Prostate gland (tissue), 2 donors: ENCODE measurements at regions of chr11 and their contacts with region 1.

Region 1: DNA sequence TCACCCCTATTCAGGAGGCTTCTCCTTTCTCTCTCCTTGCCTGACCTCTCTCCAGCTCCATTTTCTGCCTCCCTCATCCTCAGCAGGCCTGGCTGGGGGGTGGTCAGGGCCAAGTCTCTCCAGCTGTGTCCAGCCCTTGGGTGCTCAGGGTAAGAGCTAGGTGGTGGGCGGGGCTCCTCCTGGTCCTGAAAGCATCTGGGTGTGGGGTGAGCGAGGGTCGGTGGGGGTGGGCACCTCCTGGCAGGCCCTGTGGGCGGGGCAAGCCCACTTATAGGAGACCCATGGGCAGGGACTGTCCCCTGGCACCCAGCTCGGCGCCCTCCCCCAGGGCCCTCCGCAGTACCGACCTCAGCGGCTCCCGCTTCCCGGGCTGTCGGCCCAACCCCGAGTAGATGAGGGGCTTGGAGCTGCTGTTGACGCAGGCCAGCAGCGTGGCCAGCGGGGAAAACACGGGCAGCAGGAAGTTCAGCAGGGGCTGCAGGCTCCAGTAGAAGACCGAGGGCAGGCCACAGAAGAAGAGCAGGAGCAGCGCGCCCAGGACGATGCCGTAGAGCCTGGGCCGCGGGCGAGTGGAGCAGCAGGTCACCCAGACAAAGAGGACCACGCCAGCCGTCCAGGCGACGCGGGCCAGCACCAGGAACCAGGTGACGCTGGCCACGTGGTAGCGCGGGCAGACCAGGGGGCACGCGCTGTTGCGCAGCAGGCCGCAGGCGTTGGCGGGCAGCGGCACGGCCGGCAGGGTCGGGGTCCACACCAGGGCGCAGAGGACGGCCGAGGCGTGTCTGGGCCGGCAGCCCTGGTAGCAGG is 734 bp downstream of the MRGPRG start:
- DNase-seq: no peak
- H3K4me3 ChIP-seq: no peak overlapping the region
- H3K27ac ChIP-seq: no peak overlapping the region
- H3K4me1 ChIP-seq: no peaks in the 10 kb centered on the region
- H3K27me3 ChIP-seq: peaks cover 2% of the 10 kb centered on the region
- CTCF ChIP-seq: no peak
- POLR2A ChIP-seq: no peak

Region 2: DNA sequence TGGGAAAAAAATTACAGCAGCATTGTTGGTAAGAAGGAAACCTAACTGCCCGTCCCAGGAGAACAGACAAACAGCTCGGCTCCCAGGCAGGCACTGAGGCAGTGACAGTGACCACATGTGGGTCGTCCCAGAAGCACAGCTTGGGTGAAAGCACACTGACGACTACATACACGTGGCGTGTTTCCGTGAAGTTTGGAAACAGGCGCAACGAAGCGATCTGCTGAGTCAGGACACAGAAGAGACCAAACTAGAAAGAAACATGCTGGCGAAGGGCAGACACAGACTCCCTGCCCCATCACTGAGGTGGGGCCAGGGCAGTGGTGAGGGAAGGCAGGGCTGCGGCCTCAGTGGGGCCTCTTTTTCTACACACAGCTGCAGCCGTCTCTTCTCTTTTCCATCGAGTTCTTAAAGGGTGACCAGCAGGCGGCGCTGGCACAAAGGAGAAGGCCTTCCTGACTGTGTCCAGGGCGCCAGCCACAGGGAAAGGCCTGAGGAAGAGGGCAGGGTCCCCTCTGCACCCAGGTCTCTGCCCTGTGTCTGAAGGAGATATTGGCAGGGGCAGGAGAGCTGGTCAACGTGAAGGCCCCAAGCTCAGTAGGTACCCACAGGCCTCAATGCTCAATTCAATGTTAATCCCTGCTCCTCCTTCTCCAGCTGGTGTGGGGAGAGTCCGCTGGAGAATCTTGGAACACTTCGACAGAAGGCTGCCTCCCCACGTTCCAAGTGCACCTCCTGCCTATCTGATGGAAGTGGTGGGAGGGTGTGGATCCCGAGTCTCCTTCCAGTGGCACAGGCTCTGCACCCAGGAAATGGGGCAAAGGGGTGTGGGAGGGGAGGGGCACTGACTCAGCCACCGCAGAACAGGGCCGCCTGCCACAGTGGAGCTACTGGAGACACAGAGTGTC is 180.6 kb before region 1 on chr11:
- intact Hi-C with region 1: loop called (anchors 5 kb)
- DNase-seq: peak; percentile 60
- H3K4me3 ChIP-seq: no peak overlapping the region
- H3K27ac ChIP-seq: no peak overlapping the region
- H3K4me1 ChIP-seq: no peaks in the 10 kb centered on the region
- H3K27me3 ChIP-seq: no peaks in the 10 kb centered on the region
- CTCF ChIP-seq: peak; percentile 25 to 82 (median 73)
- POLR2A ChIP-seq: no peak

Region 3: GRCh38 chr11:3109921-3110706 is 107.8 kb before region 1 on chr11:
- intact Hi-C with region 1: loop called (anchors 5 kb)
- DNase-seq: peak; percentile 32
- H3K4me3 ChIP-seq: no peak overlapping the region
- H3K27ac ChIP-seq: no peak overlapping the region
- H3K4me1 ChIP-seq: no peaks in the 10 kb centered on the region
- H3K27me3 ChIP-seq: no peaks in the 10 kb centered on the region
- CTCF ChIP-seq: peak; percentile 41 to 75 (median 64)
- POLR2A ChIP-seq: no peak

Region 4: GRCh38 chr11:3160252-3161031 is 57.4 kb before region 1 on chr11:
- intact Hi-C with region 1: loop called (anchors 5 kb)
- DNase-seq: peak; percentile 74
- H3K4me3 ChIP-seq: peak overlapping the region; percentile 29
- H3K27ac ChIP-seq: peak overlapping the region; percentile 62 to 66
- H3K4me1 ChIP-seq: peaks cover 19% of the 10 kb centered on the region
- H3K27me3 ChIP-seq: no peaks in the 10 kb centered on the region
- CTCF ChIP-seq: no peak
- POLR2A ChIP-seq: peak; percentile 6

Region 5: GRCh38 chr11:3341298-3341697 is 123.4 kb after region 1 on chr11:
- intact Hi-C with region 1: no loop called
- DNase-seq: peak; percentile 40
- H3K4me3 ChIP-seq: no peak overlapping the region
- H3K27ac ChIP-seq: no peak overlapping the region
- H3K4me1 ChIP-seq: no peaks in the 10 kb centered on the region
- H3K27me3 ChIP-seq: peaks cover 2% of the 10 kb centered on the region
- CTCF ChIP-seq: peak; percentile 38 to 74 (median 68)
- POLR2A ChIP-seq: no peak